Posterior cingulate gyrus (tissue), 11 donors: ENCODE measurements at regions of chr14 and their contacts with region 1.

Region 1: GRCh38 chr14:52131640-52132320 is 62.9 kb upstream of the NID2 start:
- DNase-seq: peak in 9 of 10 donors; percentile 38 to 92 (median 69)

Region 2: DNA sequence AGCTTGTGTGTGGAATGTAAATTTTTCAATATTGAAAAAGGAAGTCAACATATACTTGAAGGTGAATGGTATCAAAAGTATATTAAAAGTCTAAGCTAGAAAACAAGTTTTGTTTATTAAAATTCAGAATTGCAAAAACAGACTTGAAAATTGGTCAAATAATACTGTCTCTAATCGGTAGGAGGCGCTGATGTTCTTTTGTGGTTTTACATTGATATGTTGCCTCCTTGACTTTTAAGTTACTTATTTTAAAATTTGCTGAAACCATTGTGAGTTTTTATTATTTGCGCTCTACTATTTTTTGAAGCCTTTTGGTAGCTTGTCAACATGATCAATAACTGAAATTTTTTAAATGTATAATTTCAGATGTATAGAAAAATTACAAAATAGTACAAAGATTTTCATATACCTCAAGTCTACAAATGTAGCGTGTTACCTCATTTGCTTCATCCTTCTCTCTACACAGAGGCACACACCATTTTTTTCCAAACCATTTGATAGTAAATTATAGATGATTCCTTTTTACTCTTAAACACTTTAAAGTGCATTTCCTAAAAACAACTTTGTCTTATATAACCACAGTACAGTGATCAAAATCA is 135.5 kb before region 1 on chr14:
- intact Hi-C with region 1: loop called (anchors 1 kb)
- DNase-seq: no peak

Region 3: DNA sequence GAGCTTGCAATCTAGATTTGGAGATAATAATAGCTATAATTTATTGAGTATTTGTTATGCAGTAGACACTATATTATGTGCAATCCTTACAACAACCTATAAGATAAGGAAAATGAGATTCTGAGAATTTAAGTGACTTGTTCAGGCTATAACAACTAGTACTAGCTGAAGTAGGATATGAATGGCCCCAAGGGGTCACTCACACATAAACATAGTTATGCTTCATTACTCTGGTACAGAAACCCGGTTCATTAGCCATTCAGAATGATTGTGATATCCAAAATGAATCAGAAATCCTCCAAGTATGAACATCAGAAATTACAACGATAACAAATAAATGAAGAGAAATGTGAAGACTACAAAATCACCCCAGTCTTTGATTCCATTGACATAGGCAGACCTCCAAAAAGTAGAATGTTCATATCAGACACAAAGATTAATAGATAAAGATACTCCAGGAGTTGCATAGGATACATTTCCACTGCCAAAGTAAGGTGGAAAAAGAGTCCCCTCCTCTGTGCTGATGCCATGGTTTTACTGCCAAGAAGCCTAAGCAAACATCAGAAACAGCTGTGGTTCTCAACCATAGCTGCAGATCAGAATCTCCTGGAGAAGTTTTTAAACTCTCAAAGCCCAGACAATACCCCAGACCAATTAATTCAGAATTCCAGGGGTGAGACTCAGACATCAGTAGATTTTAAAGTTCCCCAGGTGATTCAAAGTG is 54.4 kb before region 1 on chr14:
- intact Hi-C with region 1: loop called (anchors 1 kb)
- DNase-seq: no peak

Region 4: DNA sequence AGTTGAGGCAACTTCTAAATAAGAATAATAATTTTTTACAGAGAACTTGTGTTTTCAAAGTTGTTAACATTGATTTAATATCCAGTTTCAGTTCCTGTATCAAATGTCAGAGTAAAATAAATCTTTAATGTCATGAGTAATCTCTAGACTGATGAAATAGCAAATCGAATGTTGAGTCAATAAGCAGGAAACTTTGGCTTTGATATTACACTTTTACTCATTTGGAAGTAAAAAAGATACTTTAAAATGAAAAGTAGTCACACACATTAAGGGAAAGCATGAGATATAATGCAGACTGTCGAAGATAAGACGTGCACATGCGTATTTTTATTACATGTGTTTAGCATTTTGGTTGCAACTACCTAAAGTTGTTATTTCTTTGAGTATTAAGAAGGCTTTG is 57.5 kb after region 1 on chr14:
- intact Hi-C with region 1: no loop called
- DNase-seq: no peak